Activated T-helper 1 cell treated with anti-CD3 and anti-CD28 coated beads, Interleukin-12 subunit alpha, Interleukin-12 subunit beta, Interleukin-2, Interleukin-4 antibody, amounts not matched to agents 30 ng/mL and 10 ng/mL and 1 ng/mL, durations not matched to agents 14 hours and 24 hours and 36 hours (primary cell): ENCODE measurements at regions of chr3 and their contacts with region 1.

Region 1: DNA sequence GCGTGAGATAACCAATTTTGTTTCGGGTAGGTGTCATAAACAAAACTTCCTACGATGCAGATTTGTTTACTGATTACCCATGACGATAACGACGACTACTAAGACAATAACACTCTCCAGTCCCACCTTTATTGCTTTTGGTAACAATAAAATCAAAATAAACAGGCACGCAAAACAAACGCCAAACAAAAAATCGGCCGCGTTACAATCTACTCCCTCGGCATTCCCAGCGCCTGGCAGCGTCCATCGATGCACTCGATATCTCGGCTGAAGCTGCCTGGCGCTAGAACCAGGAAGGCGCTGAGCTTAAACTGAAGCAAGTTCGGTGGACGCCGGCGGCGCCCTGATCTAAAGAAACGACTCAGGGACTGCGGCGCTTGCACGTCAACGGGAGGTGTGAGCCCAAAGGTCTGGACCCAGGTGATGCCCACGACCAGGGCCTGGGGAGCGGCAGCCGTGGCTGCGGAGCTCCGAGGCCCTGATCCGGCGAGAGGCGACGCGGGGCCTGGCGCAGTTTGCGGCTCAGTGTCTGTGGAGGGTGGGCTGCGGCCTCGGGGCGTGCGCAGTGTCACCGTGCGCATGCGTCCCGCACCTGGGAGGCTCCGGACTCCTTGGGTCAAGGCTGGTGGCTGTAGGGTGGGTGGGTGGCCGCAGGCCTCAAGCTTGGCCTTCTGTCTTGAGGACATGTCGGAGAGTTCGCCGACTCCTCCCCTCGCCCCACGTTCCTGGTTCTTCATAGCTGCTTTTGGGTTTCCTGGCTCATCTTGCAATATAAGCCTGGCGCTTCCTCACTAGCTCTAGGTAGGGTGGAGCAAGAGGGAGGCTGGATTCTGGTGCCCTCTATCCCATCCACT is at the start of gene RSRC1:
- DNase-seq: peak; percentile 71
- H3K4me3 Mint-ChIP-seq: peak within 1 kb of the TSS; percentile 87
- H3K27ac Mint-ChIP-seq: peak within 1 kb of the TSS; percentile 65
- H3K4me1 Mint-ChIP-seq: peaks cover 62% of the 10 kb centered on the region
- H3K27me3 Mint-ChIP-seq: peaks cover 39% of the 10 kb centered on the region
- total RNA-seq, gene RSRC1: 41.1 and 41.8 TPM in 2 replicates

Region 2: DNA sequence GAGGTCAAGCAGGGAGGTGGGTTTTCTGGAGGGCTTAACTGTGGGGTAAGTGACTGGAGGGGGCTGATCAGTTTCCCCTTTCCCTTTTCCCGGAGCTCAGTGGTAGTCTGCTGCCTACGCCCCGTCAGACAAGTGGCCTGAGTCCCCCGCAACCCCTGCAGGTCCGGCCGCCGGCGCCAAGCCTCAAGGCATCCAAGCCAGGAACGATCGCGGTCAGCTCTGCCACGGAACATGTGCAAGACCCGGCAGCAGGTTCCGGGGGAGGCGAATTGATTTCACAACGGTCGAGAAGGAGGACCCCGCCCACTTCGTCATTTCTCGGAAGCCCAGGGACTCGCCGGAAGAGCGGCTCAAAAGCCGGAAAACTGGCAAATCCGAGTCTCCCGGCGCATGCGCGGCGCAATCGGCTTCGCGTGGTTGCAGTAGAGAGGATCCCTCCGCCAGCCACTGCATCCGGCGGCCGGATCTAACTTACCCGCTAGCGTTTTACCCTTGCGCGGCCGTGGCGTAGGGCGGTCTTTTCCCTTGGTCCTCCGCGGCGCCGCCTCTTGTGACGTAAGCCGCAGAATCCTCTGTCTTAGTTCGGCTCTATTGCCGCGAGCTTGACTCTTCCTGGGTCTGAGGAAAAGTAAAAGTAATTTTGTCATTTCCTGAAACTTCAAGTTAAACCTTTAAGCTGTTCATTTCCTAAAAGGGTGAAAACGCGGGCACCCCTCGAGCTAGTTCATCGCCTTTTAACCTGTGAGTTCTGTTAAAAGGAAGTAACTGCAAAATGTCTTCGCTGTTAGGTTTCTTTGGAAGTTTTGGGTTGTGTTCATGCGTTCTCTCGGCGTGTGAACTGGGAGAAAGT is 935.2 kb before region 1 on chr3:
- intact Hi-C with region 1: loop called (anchors 10 kb)
- DNase-seq: peak; percentile 98
- H3K4me3 Mint-ChIP-seq: peak overlapping the region; percentile 94
- H3K27ac Mint-ChIP-seq: peak overlapping the region; percentile 96
- H3K4me1 Mint-ChIP-seq: peaks cover 47% of the 10 kb centered on the region
- H3K27me3 Mint-ChIP-seq: peaks cover 2% of the 10 kb centered on the region

Region 3: DNA sequence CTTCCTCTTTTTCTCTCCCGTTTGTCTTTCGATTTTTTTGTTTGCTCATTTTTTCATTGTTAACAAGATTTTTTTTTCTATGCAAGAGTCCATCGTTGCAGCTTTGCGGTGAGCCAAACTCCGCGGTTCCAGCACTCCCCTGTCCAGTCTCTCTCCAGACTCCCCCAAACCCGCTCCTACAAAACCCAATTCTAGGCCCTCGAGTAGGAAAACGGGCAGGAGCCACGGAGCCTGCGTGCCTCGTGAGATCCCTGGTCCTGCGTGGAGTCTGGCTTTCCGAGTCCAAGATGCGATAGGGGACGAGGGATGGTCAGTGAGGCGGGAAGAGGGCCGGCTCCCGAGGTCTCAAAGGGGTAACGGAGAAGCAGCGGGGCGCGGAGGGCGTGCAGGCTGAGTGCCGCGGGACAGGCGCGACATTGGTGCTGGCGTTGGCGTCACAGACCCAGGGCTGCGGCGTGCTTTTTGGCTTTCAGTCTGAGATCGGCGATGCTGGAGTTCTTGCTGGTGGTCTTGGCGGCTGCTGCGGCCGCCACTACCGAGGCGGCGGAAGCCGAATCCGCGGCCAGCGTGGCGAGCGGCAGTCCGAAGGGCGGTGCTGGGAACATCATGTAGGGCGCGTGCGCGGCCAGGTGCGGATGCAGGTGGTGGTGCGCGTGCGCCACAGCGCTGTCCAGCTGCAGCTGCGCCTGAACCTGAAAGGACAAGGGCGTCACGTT is 12.3 kb before region 1 on chr3:
- intact Hi-C with region 1: loop called (anchors 1 kb)
- DNase-seq: peak; percentile 73
- H3K4me3 Mint-ChIP-seq: peak overlapping the region; percentile 89
- H3K27ac Mint-ChIP-seq: peak overlapping the region; percentile 84
- H3K4me1 Mint-ChIP-seq: peaks cover 18% of the 10 kb centered on the region
- H3K27me3 Mint-ChIP-seq: peaks cover 75% of the 10 kb centered on the region

Region 4: DNA sequence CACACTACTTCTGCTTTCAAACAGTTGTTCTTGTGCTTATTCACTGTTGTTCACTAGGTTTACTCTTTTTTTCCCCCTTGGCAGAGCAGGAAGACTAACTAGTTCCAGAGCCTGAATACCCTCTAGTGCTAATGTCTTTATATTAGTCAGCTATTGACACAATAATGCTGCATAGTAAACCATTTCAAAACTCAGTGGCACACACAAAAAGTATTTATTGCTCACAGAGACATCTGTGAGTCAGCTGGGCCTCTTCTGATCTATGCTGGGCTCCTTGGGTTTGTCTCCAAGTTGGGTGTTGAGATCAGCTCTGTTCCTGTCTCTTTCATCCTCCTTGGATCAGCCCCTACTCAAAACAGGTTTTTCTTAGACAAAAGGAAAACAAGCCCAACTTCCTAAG is 50.9 kb after region 1 on chr3:
- intact Hi-C with region 1: no loop called
- DNase-seq: no peak
- H3K4me3 Mint-ChIP-seq: no peak overlapping the region
- H3K27ac Mint-ChIP-seq: no peak overlapping the region
- H3K4me1 Mint-ChIP-seq: no peaks in the 10 kb centered on the region
- H3K27me3 Mint-ChIP-seq: no peaks in the 10 kb centered on the region

Region 5: DNA sequence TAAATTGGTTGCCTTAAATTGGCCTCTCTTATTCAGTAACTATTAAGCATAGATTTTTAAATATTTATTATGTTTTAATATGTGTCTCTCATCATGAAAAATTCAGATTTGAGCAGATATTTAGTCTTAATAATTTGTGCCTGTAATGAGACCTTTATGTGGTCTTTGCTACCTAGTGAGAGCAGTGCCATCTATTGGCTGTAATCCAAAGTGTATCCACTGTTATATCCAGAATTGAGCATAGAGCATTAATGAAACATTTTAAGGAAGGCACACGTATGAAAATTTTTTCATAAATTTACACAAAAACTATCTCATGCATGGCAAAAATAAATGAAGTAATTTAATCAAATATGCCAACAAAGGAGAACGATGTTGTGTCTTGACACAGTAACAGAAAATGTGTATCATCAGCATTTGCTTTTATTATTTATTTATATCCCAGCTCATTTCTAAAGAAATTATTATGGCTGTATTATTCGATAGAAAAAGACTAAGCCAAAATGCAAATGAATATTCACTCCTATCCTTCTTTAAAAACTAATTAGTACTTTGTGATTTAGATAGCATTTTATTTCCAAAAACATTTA is 203.4 kb after region 1 on chr3:
- intact Hi-C with region 1: loop called (anchors 1 kb)
- DNase-seq: no peak
- H3K4me3 Mint-ChIP-seq: no peak overlapping the region
- H3K27ac Mint-ChIP-seq: no peak overlapping the region
- H3K4me1 Mint-ChIP-seq: no peaks in the 10 kb centered on the region
- H3K27me3 Mint-ChIP-seq: no peaks in the 10 kb centered on the region

Region 6: GRCh38 chr3:158434412-158435038 is 324.5 kb after region 1 on chr3:
- intact Hi-C with region 1: loop called (anchors 5 kb)
- DNase-seq: peak; percentile 6
- H3K4me3 Mint-ChIP-seq: no peak overlapping the region
- H3K27ac Mint-ChIP-seq: no peak overlapping the region
- H3K4me1 Mint-ChIP-seq: no peaks in the 10 kb centered on the region
- H3K27me3 Mint-ChIP-seq: no peaks in the 10 kb centered on the region

Region 7: GRCh38 chr3:158644345-158644908 is 534.4 kb after region 1 on chr3 and contains the start of gene GFM1:
- intact Hi-C with region 1: loop called (anchors 5 kb)
- DNase-seq: peak; percentile 87
- H3K4me3 Mint-ChIP-seq: peak within 1 kb of the TSS; percentile 88
- H3K27ac Mint-ChIP-seq: peak within 1 kb of the TSS; percentile 83
- H3K4me1 Mint-ChIP-seq: peaks cover 34% of the 10 kb centered on the region
- H3K27me3 Mint-ChIP-seq: no peaks in the 10 kb centered on the region
- total RNA-seq, gene GFM1: 70.4 and 71.7 TPM in 2 replicates

Region 8: DNA sequence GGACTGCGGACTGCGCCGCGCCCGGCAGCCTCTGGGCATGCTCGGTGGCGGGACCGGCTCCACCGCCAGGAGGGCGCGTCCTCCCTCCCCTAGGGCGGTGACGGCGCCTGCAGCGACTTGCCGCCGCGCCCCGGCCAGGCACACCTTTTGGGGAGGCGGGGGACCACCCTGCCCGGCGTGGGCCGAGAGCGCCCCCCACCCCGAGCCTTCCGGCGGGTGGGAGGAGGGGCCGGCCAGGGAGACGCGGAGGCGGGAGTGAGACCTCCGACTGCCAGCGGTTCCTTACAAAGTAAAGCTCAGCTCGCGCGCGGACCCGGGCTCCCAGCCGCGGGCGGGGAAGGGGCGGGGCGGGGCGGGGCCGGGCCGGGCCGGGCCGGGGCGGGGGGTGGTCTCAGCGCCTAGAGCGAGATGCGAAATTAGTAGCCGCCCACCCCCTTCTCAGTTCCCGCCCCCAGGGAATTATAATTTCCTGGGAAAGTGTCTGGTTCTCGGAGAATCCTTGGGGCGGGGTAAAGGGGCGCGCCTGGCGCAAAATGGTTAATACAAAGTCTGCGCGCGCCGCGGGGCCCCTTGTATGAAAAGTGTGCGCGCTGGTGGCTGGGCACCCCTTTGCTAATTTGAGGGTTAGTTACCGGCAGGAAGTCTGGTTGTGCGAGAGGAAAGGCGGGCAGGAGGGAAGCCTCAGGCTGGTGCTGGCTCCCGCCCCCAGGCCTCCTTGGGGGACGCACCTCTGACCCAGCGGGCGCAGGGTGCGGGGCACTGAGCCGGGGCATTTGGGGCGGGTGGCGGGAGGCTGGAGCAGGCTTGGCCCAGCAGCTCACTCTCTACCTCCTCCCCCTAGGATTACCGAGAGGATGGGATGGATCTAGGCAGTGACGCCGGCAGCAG is 1653.8 kb after region 1 on chr3:
- intact Hi-C with region 1: loop called (anchors 10 kb)
- DNase-seq: peak; percentile 33
- H3K4me3 Mint-ChIP-seq: peak overlapping the region; percentile 87
- H3K27ac Mint-ChIP-seq: peak overlapping the region; percentile 67
- H3K4me1 Mint-ChIP-seq: peaks cover 10% of the 10 kb centered on the region
- H3K27me3 Mint-ChIP-seq: peaks cover 66% of the 10 kb centered on the region